ENCODE measurements at regions of chr6 and their contacts with region 1.

Region 1: GRCh38 chr6:148177589-148178233 is 164.9 kb upstream of the SASH1 start:
- DNase-seq: peak; percentile 53 to 74 (median 66)
- ATAC-seq: peak in 3 of 4 donors; percentile 41 to 60 (median 50)
- H3K4me3 ChIP-seq: no peak overlapping the region
- H3K27ac ChIP-seq: no peak overlapping the region
- H3K4me1 ChIP-seq: peaks cover 0 to 3% (median 0%) of the 10 kb centered on the region in 12 donors
- H3K27me3 ChIP-seq: no peaks in the 10 kb centered on the region
- CTCF ChIP-seq: peak; percentile 75 to 90 (median 86)
- POLR2A ChIP-seq: no peak

Region 2: DNA sequence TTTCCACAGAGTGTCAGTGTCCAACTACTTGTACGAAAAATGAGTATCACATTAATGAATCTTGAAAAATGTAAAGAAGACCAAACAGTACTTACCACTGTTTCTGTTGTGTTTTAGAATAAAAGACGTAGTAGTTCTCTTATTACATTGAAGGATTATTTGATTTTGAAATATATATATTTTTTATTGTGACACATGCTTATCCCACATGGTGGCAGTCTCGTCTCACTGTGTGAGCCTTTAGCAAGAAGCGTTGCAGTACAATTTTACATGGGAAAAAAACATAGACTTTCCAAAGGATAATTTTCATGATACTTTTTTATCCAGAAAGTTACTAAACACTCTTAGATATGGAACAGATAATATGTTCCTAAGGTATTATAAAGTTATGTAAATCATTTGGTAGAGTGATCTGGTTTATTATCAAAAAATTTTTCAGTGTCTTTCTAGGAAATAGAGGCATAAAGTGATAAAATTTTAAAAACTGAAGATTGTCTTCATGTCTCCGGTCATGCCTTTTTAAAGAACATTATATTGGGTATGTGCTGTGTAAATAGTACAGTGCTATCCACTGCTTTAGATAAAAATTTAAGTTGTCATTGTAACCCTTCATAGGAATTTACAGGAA is 786.7 kb before region 1 on chr6:
- intact Hi-C with region 1: loop called in 1 of 10 experiments (anchors 10 kb)
- DNase-seq: no peak
- ATAC-seq: no peak
- H3K4me3 ChIP-seq: no peak overlapping the region
- H3K27ac ChIP-seq: no peak overlapping the region
- H3K4me1 ChIP-seq: no peaks in the 10 kb centered on the region
- H3K27me3 ChIP-seq: no peaks in the 10 kb centered on the region
- CTCF ChIP-seq: peak in 11 of 12 donors; percentile 24 to 57 (median 38)
- POLR2A ChIP-seq: no peak

Region 3: GRCh38 chr6:148064406-148065134 is 113.1 kb before region 1 on chr6:
- intact Hi-C with region 1: no loop called
- DNase-seq: peak in 3 of 5 donors; percentile 6 to 53 (median 27)
- ATAC-seq: no peak
- H3K4me3 ChIP-seq: no peak overlapping the region
- H3K27ac ChIP-seq: no peak overlapping the region
- H3K4me1 ChIP-seq: no peaks in the 10 kb centered on the region
- H3K27me3 ChIP-seq: no peaks in the 10 kb centered on the region
- CTCF ChIP-seq: no peak
- POLR2A ChIP-seq: no peak

Region 4: DNA sequence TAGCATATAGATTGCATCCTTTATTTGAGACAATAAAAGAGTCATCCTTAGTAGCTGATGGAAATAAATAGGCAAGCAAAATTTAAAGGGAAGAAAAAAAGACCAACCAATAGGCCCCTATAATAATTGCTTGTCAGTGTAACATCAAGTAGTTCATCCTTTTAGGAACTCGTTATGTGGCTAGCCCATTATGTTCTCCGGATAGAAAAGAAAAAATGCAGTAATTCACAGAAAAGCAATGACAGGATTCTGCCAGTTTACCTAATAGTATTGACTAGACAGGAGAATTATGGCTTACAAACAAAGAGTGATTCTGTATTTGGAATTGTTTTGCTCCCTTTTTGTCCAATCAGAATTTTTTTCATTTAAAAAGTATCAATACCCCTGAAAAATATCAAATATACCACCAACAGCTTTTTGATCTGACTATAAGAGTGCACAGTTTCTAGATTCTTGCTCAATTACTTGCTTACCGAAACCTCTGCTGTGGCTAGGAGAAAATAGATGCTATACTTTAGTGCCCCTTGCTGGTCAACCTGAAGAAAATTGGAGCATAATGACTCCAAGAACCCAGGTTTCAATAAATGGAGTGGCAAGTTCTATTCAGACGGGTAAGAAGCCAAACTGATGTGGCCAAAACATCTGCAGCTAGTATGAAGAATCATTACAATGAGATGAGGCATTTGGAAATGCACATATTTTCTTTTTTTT is 73.4 kb after region 1 on chr6:
- intact Hi-C with region 1: loop called (anchors 1 to 5 kb)
- DNase-seq: no peak
- ATAC-seq: peak in 3 of 4 donors; percentile 56 to 82 (median 65)
- H3K4me3 ChIP-seq: no peak overlapping the region
- H3K27ac ChIP-seq: peak overlapping the region in 1 of 12 donors; percentile 14
- H3K4me1 ChIP-seq: peaks cover 0 to 32% (median 1%) of the 10 kb centered on the region in 12 donors
- H3K27me3 ChIP-seq: no peaks in the 10 kb centered on the region
- CTCF ChIP-seq: peak in 11 of 12 donors; percentile 15 to 62 (median 45)
- POLR2A ChIP-seq: no peak

Region 5: DNA sequence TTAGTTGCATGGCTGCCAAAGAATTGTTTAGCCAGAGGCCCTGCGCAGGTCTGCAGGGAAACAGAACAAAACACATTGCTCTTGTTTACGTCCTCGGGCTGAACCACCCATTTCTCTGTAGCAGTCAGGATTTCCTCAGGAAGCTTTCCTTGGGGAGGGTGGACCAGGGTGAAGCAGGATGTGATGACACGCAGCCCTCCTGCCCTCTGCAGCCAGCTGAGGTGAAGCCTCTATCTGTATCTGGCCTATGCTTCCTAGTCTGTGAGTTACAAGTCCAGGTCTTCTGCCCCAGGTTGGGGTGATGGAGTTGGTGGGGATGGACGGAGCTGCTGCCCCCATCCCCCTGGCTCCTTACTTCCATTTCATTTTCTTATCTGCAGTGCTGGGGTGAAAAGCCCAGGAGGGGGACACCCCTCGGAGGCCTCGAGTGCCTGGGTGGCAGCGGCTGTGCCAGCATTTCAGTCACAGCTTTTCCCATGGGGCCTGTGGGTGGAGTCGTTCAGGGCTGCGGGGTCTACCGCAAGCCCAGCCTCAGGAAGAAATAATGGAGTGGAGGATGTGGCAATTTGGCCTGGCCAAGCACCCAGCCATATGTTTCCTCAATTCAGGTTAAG is 189.8 kb after region 1 on chr6:
- intact Hi-C with region 1: no loop called
- DNase-seq: peak; percentile 72 to 81 (median 75)
- ATAC-seq: peak; percentile 77 to 91 (median 88)
- H3K4me3 ChIP-seq: peak overlapping the region in 1 of 12 donors; percentile 12
- H3K27ac ChIP-seq: peak overlapping the region; percentile 67 to 96 (median 86)
- H3K4me1 ChIP-seq: peaks cover 6 to 94% (median 63%) of the 10 kb centered on the region in 12 donors
- H3K27me3 ChIP-seq: no peaks in the 10 kb centered on the region
- CTCF ChIP-seq: no peak
- POLR2A ChIP-seq: no peak

Region 6: DNA sequence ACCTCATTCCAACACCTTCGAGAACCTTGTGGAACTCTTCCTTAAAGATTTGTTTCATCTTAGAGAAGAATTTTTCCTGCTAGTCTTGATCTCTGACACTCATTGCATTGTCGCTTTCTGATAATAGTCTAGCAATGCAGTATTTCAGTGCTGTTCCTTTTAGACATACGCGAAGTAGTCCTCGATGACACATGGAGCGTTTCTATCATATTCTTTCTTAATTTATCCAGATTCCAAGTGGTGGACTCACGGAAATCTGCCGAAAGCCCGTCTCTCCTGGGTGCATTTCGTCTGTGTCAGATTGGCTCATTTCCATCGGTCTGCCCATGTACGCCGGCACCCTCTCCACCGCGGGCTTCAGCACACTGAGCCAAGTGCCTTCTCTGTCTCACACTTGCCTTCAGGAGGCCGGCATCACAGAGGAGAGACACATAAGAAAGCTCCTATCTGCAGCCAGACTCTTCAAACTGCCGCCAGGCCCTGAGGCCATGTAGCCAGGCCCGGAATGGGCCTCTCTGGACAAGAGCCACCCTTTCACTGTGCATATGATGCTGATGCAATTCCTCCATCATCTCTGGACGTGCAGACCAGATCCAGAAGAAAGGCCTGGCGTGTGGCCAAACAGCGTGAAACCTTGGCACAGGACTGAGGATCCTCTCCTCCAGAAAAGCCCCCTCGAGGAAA is 370.5 kb after region 1 on chr6:
- intact Hi-C with region 1: loop called in 1 of 10 experiments (anchors 10 kb)
- DNase-seq: peak in 2 of 5 donors; percentile 48 to 75
- ATAC-seq: peak in 3 of 4 donors; percentile 25 to 68 (median 49)
- H3K4me3 ChIP-seq: no peak overlapping the region
- H3K27ac ChIP-seq: peak overlapping the region in 3 of 12 donors; percentile 1 to 28 (median 12)
- H3K4me1 ChIP-seq: peaks cover 0 to 26% (median 19%) of the 10 kb centered on the region in 12 donors
- H3K27me3 ChIP-seq: no peaks in the 10 kb centered on the region
- CTCF ChIP-seq: no peak
- POLR2A ChIP-seq: no peak